ENCODE measurements at regions of chr13 and their contacts with region 1.

Region 1: GRCh38 chr13:37648604-37649003 is 50.0 kb upstream of the POSTN start:
- DNase-seq: peak; percentile 79
- ATAC-seq: peak; percentile 93
- H3K4me3 ChIP-seq: no peak overlapping the region
- H3K27ac ChIP-seq: peak overlapping the region; percentile 94
- H3K4me1 ChIP-seq: peaks cover 46% of the 10 kb centered on the region
- H3K27me3 ChIP-seq: no peaks in the 10 kb centered on the region
- CTCF ChIP-seq: no peak

Region 2: GRCh38 chr13:37681300-37682032 is 32.9 kb after region 1 on chr13:
- CTCF ChIA-PET with region 1: no interaction called
- POLR2A ChIA-PET with region 1: no interaction called
- intact Hi-C with region 1: loop called (anchors 5 kb)
- DNase-seq: peak; percentile 46
- ATAC-seq: peak; percentile 42; the same call in 1 of the 2 replicates
- H3K4me3 ChIP-seq: no peak overlapping the region
- H3K27ac ChIP-seq: peak overlapping the region; percentile 56
- H3K4me1 ChIP-seq: peaks cover 18% of the 10 kb centered on the region
- H3K27me3 ChIP-seq: no peaks in the 10 kb centered on the region
- CTCF ChIP-seq: no peak

Measured in PC-3 (cell line).